Posterior vena cava (tissue), 2 donors: ENCODE measurements at regions of chr2 and their contacts with region 1.

Region 1: GRCh38 chr2:176789751-176790150 is 422.8 kb upstream of the HNRNPA3 start:
- DNase-seq: no peak

Region 2: GRCh38 chr2:175074478-175074877 is 1715.3 kb before region 1 on chr2:
- intact Hi-C with region 1: loop called in 1 of 2 experiments (anchors 10 kb)
- DNase-seq: no peak

Region 3: GRCh38 chr2:175535631-175536030 is 1254.1 kb before region 1 on chr2:
- intact Hi-C with region 1: no loop called
- DNase-seq: no peak

Region 4: GRCh38 chr2:175709248-175709647 is 1080.5 kb before region 1 on chr2:
- intact Hi-C with region 1: no loop called
- DNase-seq: no peak